ENCODE measurements at regions of chr9 and their contacts with region 1.

Region 1: GRCh38 chr9:116697362-116697761 is 10.3 kb downstream of the TRIM32 start:
- DNase-seq: peak; percentile 75
- H3K4me3 ChIP-seq: no peak overlapping the region
- CTCF ChIP-seq: no peak

Region 2: GRCh38 chr9:116687074-116687753 is 10.1 kb before region 1 on chr9 and contains the start of gene TRIM32:
- CTCF ChIA-PET with region 1: no interaction called
- POLR2A ChIA-PET with region 1: interaction called, 14 read pairs
- DNase-seq: no peak
- H3K4me3 ChIP-seq: peak within 1 kb of the TSS; percentile 64
- CTCF ChIP-seq: no peak